Activated CD8-positive, alpha-beta T cell treated with anti-CD3 and anti-CD28 coated beads, Interleukin-2, amount 10 ng/mL, durations not matched to agents 7 days and 5 days (primary cell): ENCODE measurements at regions of chr5 and their contacts with region 1.

Region 1: GRCh38 chr5:66814146-66814991 is 218.2 kb downstream of the MAST4 start:
- DNase-seq: peak; percentile 74
- ATAC-seq: peak; percentile 81
- H3K4me3 Mint-ChIP-seq: no peak overlapping the region
- H3K27ac Mint-ChIP-seq: no peak overlapping the region
- H3K4me1 Mint-ChIP-seq: peaks cover 26% of the 10 kb centered on the region
- H3K27me3 Mint-ChIP-seq: peaks cover 4% of the 10 kb centered on the region

Region 2: GRCh38 chr5:66757188-66757833 is 57.1 kb before region 1 on chr5:
- CTCF ChIA-PET with region 1: no interaction called
- POLR2A ChIA-PET with region 1: no interaction called
- DNase-seq: peak; percentile 39
- ATAC-seq: no peak
- H3K4me3 Mint-ChIP-seq: no peak overlapping the region
- H3K27ac Mint-ChIP-seq: no peak overlapping the region
- H3K4me1 Mint-ChIP-seq: no peaks in the 10 kb centered on the region
- H3K27me3 Mint-ChIP-seq: peaks cover 26% of the 10 kb centered on the region

Region 3: GRCh38 chr5:66777868-66778267 is 36.5 kb before region 1 on chr5:
- CTCF ChIA-PET with region 1: no interaction called
- POLR2A ChIA-PET with region 1: no interaction called
- DNase-seq: no peak
- ATAC-seq: no peak
- H3K4me3 Mint-ChIP-seq: no peak overlapping the region
- H3K27ac Mint-ChIP-seq: no peak overlapping the region
- H3K4me1 Mint-ChIP-seq: no peaks in the 10 kb centered on the region
- H3K27me3 Mint-ChIP-seq: peaks cover 2% of the 10 kb centered on the region

Region 4: DNA sequence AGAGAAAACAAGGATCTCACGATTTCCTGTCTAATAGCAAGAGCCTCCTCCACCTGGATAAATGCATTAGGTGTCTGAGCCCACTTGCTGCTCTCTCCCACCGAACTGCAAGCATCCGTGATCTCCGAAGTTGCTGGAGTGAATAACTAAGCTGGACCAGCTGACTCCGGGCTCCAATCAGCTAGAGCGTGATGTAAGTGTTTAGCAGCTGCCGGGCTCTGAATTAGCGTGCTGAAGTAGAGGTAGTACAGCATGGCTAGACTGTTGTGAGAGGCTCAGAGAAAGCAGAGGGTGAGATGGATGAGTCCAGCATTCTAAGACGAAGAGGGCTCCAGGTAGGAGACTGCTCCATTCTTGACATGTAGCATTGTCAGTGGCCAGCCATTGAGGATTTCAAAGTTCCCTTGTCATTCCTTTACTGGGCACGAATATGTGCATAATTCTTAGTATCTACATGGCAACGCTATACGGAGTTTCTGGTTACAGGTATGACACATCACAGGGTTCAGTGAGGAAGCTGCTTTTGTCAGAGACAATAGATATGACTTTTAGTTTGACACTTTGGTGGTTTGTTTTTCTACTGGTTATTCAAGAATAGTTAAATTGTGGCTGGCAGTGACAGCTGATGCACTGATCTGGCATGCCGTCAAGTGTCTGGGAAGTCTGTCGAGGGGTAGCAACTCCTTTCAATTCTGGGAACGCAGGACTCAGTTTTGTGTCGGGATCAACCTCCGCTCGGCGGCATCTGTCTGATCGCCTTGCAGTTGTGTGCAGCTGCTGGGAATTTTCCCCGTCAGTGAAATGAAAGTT is 14.4 kb after region 1 on chr5:
- CTCF ChIA-PET with region 1: interaction called, 99 read pairs
- POLR2A ChIA-PET with region 1: interaction called, 3 read pairs
- DNase-seq: peak; percentile 84
- ATAC-seq: peak; percentile 98
- H3K4me3 Mint-ChIP-seq: peak overlapping the region; percentile 86
- H3K27ac Mint-ChIP-seq: peak overlapping the region; percentile 87
- H3K4me1 Mint-ChIP-seq: peaks cover 43% of the 10 kb centered on the region
- H3K27me3 Mint-ChIP-seq: no peaks in the 10 kb centered on the region

Region 5: DNA sequence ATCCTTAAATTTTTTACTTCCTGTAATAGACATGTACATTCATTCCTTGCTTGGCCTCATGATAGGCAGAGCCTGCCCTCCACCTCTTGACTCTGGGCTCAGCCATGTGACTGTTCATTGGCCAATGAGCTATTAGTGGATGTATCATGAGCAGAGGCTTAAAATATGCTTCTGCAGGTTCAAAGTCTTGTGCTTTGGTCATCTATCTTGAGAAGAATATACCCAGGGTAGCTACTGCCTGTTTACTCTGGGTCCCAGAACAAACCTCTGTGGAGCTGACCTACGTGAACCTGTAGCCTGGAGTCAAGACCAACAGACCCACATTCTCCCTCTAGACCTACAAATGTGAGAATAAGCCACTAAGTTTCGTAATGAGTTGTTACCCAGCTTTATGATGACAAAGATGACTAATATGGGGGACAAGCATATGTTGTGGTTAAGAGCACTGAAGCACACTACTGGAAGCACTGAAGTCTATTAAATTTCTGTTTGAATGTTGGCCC is 26.2 kb after region 1 on chr5:
- CTCF ChIA-PET with region 1: interaction called, 33 read pairs
- POLR2A ChIA-PET with region 1: no interaction called
- DNase-seq: peak; percentile 62
- ATAC-seq: peak; percentile 92
- H3K4me3 Mint-ChIP-seq: peak overlapping the region; percentile 34
- H3K27ac Mint-ChIP-seq: peak overlapping the region; percentile 90
- H3K4me1 Mint-ChIP-seq: peaks cover 57% of the 10 kb centered on the region
- H3K27me3 Mint-ChIP-seq: no peaks in the 10 kb centered on the region

Region 6: GRCh38 chr5:66864331-66864840 is 50.0 kb after region 1 on chr5:
- CTCF ChIA-PET with region 1: interaction called, 71 read pairs
- POLR2A ChIA-PET with region 1: no interaction called
- DNase-seq: peak; percentile 50
- ATAC-seq: peak; percentile 70
- H3K4me3 Mint-ChIP-seq: no peak overlapping the region
- H3K27ac Mint-ChIP-seq: no peak overlapping the region
- H3K4me1 Mint-ChIP-seq: no peaks in the 10 kb centered on the region
- H3K27me3 Mint-ChIP-seq: peaks cover 19% of the 10 kb centered on the region

Region 7: DNA sequence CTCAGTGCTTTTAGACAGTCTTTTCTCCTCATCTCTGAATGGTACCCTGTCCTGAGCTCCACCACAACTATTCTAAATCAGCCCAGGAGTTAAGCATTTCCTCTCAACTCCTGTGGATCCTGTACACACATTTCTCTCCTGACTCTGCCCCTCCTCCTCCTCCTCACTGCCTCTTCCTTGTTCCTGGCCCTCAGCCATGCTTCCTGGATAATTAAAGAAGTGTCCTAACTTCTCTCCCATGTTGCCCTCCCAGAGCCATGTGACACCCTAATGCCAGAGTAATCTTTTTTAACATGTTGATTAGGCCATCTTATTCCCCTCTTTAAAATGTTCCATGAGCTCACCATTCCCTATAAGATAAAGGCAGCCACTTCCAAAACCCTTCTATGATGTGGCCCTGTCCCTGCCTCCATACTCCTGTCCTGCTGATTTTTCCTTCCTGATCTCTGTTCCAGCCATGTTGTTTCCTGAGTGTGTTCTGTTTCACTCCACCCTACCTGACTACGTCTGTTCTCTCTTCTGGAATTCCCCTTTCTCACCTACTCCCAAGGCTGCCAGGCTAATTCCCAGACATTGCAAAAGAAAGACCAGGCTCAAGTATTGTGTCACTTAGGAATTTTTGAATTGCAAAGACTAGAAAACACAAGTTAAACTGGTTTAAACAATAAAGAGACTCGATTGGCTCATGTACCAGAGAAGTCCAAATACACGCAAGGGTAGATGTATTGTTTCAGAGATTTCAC is 77.0 kb after region 1 on chr5:
- CTCF ChIA-PET with region 1: interaction called, 11 read pairs
- POLR2A ChIA-PET with region 1: no interaction called
- DNase-seq: no peak
- ATAC-seq: no peak
- H3K4me3 Mint-ChIP-seq: no peak overlapping the region
- H3K27ac Mint-ChIP-seq: no peak overlapping the region
- H3K4me1 Mint-ChIP-seq: peaks cover 8% of the 10 kb centered on the region
- H3K27me3 Mint-ChIP-seq: peaks cover 40% of the 10 kb centered on the region

Region 8: DNA sequence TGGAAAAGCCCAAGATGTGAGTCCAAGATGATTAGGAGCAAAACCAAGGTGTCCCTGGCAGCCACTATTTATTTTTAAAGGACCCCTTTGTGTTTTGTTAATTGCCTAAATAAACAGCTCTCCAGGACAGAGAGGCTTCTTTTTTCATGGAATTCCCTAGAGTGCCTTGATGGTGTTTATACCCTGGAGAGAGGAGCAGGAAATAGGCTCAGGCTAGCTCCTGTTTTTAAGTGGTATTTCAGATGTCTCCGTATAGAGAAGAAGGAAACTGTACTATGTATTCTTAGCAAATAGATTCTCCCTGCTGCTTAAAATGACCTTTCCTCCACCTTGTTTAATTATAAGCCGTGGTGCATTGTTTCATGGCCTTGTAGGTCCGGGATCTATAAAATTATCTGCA is 89.8 kb after region 1 on chr5:
- CTCF ChIA-PET with region 1: no interaction called
- POLR2A ChIA-PET with region 1: no interaction called
- DNase-seq: no peak
- ATAC-seq: no peak
- H3K4me3 Mint-ChIP-seq: no peak overlapping the region
- H3K27ac Mint-ChIP-seq: no peak overlapping the region
- H3K4me1 Mint-ChIP-seq: no peaks in the 10 kb centered on the region
- H3K27me3 Mint-ChIP-seq: peaks cover 19% of the 10 kb centered on the region

Region 9: GRCh38 chr5:67038817-67039603 is 224.6 kb after region 1 on chr5:
- CTCF ChIA-PET with region 1: no interaction called
- POLR2A ChIA-PET with region 1: no interaction called
- DNase-seq: no peak
- ATAC-seq: no peak
- H3K4me3 Mint-ChIP-seq: no peak overlapping the region
- H3K27ac Mint-ChIP-seq: no peak overlapping the region
- H3K4me1 Mint-ChIP-seq: no peaks in the 10 kb centered on the region
- H3K27me3 Mint-ChIP-seq: no peaks in the 10 kb centered on the region